Activated T-helper 2 cell treated with anti-CD3 and anti-CD28 coated beads, Interferon-gamma antibody, Interleukin-2, Interleukin-4, amounts not matched to agents 10 μg/mL and 5 μg/mL and 100 μg/mL, durations not matched to agents 14 hours and 24 hours and 36 hours (primary cell): ENCODE measurements at regions of chr12 and their contacts with region 1.

Region 1: DNA sequence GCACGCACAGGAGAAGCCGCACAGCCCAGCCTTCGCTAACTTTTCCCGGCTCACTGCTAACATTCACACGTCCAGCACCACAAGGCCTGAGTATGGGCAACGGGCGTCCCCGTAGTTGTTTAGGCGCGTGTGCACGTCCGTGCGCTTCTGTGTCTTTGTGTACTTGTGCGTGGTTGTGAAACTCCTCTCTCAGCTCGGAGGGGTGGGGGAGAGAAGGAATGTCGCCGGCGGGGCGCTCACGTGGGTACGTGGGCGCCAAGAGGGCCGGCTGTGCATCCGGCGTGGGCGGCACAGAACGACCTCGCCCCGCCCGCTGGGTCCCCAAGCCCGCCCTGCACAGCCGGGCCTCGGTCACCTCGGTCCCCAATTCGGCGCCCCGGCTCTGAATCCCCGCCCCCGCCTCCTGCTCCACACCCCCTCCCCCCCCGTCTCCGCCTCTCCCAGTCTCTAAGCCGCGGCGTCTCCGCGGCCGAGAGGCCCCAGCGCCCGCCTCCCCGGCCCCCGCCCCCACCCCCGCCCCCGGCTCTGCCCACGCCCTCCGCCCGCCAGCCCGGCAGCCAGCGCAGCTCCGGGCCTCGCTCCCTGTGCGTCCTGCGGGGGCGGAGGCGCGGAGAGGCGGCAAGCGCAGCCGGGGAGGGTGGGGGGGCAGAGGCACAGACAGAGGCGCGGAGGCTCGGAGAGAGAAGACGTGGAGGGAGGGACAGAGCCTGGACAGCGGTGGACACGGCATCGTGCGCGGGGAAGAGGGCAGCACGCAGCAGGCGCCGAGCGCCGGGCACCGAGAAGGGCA is at the start of gene NAB2:
- DNase-seq: peak; percentile 91
- H3K4me3 Mint-ChIP-seq: peak within 1 kb of the TSS; percentile 99
- H3K27ac Mint-ChIP-seq: peak within 1 kb of the TSS; percentile 98
- H3K4me1 Mint-ChIP-seq: peaks cover 62% of the 10 kb centered on the region
- H3K27me3 Mint-ChIP-seq: no peaks in the 10 kb centered on the region
- total RNA-seq, gene NAB2: 72.8 and 74.7 TPM in 2 replicates

Region 2: DNA sequence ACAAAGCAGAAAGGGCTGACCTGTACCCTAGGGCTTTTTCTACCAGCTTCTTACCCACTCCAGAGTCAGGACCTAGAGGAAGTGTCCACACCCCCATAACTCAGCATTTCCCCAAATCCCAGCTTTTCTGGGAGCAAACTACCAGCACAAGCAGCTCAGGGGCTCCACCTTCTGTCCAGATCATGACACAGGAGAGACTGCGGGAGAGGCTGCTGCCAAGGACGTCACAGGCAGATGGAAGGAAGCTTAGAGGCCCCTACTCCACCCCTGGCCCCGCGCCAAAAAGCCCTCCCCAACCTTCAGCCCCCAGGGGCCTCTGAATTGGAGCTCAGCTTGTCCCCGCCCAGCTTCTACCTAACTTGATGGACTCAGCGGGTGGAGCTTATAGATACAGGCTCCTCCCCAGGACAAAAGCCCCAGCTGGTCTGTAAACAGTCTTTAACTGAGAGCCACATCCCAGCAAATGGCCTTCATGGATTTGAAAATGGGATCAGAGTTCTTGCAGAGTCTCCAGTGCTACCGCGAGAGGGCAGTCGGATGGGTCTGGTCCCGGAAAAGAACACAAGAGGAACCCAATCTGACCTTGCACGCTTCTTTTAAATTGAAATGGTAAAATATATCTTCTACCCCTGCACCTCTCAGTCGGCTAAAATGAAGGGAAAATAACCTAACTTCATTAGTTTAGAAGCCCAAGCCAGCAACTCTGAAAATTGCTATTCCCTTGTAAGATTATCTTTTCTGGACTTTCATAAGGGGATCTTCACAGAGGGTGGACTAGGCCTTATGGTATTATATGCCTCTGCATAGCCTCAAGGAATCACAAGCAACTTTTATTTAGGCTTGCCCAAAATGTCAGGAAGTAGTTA is 451.7 kb before region 1 on chr12:
- intact Hi-C with region 1: loop called (anchors 5 kb)
- DNase-seq: peak; percentile 87
- H3K4me3 Mint-ChIP-seq: peak overlapping the region; percentile 97
- H3K27ac Mint-ChIP-seq: peak overlapping the region; percentile 93
- H3K4me1 Mint-ChIP-seq: peaks cover 47% of the 10 kb centered on the region
- H3K27me3 Mint-ChIP-seq: no peaks in the 10 kb centered on the region

Region 3: GRCh38 chr12:57069523-57069922 is 19.1 kb before region 1 on chr12:
- intact Hi-C with region 1: loop called (anchors 1 kb)
- DNase-seq: peak; percentile 46
- H3K4me3 Mint-ChIP-seq: peak overlapping the region; percentile 30
- H3K27ac Mint-ChIP-seq: peak overlapping the region; percentile 88
- H3K4me1 Mint-ChIP-seq: peaks cover 56% of the 10 kb centered on the region
- H3K27me3 Mint-ChIP-seq: no peaks in the 10 kb centered on the region